ENCODE measurements at regions of chr3 and their contacts with region 1.

Region 1: GRCh38 chr3:159763602-159764489 is 224.8 kb upstream of the IL12A start:
- DNase-seq: peak; percentile 87
- ATAC-seq: peak; percentile 84

Region 2: DNA sequence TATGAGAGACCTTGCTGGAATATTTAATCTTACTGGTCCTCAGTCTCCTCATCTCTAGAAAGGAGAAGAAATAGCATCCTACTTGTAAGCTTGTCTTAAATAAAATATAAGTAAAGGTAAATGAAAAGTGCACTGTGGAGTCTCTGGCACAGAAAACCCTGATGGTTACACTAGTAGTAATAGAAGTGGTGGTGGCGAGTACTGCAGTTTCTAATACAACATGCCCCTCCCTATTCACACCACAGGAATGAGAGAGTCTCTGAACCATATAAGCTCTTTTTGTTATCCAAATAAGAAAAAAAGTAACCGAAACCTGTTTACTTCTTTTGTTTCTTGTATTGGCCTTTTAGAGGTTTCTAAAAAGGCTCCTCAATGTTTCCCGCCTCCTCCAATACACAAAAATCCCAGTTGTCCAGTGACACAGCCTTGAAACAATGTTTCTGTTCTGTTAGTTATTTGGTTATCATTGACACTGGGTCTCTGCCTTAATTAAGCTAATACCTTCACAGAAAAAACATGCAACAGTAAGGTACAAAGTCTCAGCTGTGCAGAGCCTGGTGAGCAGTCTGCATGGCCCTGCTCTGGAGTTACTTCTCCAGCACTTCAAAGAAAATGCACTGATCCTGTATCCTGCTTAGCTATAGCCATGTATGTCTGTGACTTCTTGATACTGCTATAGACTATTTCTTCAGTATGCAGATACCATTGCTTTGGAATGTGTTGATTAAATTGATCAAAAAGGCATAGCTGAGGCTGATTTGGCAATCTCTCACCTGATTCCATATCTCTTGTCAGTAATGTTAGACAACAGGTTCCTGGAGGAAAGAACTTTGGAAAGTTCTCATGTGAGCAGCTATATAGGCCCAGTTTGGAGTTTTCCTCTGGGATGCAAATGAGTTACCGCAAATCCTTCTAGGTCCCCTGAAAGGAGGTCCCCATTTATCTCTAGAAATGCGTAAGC is 90.8 kb before region 1 on chr3:
- intact Hi-C with region 1: loop called (anchors 5 kb)
- DNase-seq: no peak
- ATAC-seq: no peak

Region 3: DNA sequence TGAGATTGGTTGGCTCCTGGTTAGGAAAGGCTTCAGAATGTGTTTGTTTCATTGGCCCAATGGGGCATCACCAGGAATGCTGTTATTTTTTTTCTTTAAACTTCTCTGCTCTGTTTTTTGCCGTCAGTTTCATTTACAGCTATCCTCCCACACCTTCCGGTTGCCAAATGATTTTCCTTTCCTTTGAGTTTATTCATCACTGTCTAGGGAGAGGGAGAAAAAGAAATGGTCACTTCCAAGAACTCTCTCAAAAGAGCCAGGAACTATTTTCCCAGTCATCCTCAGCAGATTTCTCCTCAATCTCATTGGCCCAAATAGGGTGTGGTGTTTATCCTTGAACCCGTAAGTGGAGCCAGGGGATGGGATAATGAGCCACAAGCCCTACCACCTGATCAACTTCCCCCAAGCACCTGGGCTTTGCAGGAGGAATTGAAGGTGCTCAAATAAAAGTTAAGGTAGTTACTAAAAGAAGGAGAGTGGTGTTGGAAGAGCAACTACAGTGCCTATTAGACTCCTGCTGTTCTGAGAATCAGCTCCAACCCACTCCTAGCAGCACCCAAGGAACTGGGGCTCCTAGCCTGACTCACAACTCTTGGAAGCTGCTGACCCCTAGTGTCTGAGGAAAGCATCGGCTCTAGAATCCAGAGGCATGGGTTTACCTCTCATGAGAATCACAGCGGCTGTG is 41.0 kb after region 1 on chr3:
- intact Hi-C with region 1: loop called (anchors 2 kb)
- DNase-seq: no peak
- ATAC-seq: peak; percentile 93

Region 4: DNA sequence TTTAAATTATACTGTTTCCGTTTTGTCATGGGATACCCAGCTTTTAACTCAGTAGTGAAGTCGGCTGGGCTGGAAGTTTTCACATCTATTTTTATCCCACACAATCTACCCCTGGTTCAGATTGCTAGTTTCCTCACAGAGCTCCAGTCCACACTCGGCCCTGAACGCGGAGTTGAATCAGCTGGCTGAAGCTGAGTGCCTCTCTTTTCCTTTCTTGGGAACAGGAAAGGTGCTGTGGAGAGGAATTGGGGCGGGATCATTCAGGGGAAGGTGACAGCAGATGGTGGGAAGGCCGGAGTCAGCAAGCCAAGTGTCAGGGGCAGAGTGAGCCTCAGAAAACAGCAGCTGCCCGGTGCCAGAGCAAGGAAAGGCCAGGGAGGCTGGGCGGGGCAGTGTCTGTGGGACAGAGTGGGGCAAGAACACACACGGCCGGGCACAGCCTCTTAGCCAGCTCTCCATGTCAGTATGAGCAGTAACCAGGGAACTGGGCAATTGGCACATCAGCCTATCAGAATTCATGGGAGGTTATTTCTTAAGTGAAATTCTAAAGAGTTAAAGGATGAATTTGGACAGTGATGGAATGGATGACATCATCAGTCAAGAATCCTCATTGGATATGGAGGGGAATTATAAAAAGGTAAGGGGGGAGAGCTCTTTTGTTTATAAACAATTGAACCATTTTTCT is 89.1 kb after region 1 on chr3:
- intact Hi-C with region 1: loop called (anchors 5 kb)
- DNase-seq: peak; percentile 84
- ATAC-seq: peak; percentile 86

Region 5: GRCh38 chr3:159902546-159903314 is 138.9 kb after region 1 on chr3:
- intact Hi-C with region 1: no loop called
- DNase-seq: no peak
- ATAC-seq: no peak

Region 6: DNA sequence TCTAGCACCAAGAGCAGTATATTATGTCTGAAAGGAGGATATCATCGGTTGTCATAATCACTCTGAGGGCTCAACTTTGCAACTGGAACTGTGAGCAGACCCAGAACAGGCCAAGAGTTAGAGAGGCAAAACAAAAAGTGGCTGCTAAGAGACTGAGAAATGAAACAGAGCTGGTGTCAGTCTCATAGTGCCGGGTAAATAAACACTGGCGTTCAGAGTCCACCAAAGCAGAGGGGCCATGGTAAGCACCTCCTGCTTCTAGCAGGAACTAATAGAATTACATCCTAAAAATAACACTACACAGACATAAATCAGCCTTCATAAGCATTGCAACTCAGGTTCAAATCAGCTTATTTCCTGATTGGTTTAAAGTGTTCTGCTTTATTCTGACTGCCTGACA is 214.5 kb after region 1 on chr3:
- intact Hi-C with region 1: no loop called
- DNase-seq: no peak
- ATAC-seq: peak; percentile 97